ENCODE measurements at regions of chr1 and their contacts with region 1.

Region 1: GRCh38 chr1:242454262-242455045 is 70.0 kb downstream of the PLD5 start:
- DNase-seq: peak; percentile 28
- ATAC-seq: peak; percentile 91
- H3K4me3 ChIP-seq: no peak overlapping the region
- H3K27ac ChIP-seq: no peak overlapping the region; the same call in 1 of the 2 replicates
- H3K4me1 ChIP-seq: peaks cover under 1% of the 10 kb centered on the region; the same call in 1 of the 2 replicates
- H3K27me3 ChIP-seq: no peaks in the 10 kb centered on the region
- CTCF ChIP-seq: peak; percentile 85

Region 2: DNA sequence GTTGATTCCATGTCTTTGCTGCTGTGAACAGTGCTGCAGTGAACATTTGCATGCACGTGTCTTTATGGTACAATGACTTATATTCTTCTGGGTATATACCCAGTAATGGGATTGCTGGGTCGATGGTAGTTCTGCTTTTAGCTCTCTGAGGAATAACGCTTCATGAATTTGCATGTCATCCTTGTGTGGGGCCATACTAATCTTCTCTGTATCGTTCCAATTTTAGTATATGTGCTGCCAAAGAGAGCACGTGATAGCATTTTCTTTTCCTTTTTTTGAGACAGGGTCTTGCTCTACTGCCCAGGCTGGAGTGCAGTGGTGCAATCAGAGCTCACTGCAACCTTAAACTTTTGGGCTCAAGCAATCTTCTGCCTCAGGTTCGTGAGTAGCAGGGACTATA is 430.6 kb before region 1 on chr1:
- CTCF ChIA-PET with region 1: no interaction called
- POLR2A ChIA-PET with region 1: no interaction called
- in situ Hi-C with region 1: no loop called
- intact Hi-C with region 1: loop called (anchors 10 kb)
- DNase-seq: no peak
- ATAC-seq: no peak
- H3K4me3 ChIP-seq: no peak overlapping the region
- H3K27ac ChIP-seq: no peak overlapping the region
- H3K4me1 ChIP-seq: no peaks in the 10 kb centered on the region
- H3K27me3 ChIP-seq: no peaks in the 10 kb centered on the region
- CTCF ChIP-seq: no peak

Region 3: DNA sequence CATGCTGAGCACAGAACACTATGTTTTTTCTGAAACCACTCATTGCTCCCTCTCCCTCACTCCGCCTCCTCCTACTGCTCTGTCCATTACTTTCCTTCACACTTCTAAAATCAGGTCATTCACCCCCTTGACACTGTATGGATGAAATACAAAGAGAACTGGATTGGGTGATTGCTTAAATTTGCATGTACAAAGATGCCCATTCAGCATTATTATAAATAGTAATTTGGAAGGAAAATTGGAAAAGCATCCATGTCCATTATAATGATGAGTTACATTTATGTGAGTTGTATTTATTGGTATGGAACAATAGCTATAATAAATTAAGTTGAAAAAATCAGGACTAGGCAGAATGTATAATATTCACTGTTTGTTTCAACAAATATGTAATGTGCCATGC is 13.7 kb before region 1 on chr1:
- CTCF ChIA-PET with region 1: interaction called, 10 read pairs
- POLR2A ChIA-PET with region 1: no interaction called
- in situ Hi-C with region 1: no loop called
- intact Hi-C with region 1: no loop called
- DNase-seq: no peak
- ATAC-seq: no peak
- H3K4me3 ChIP-seq: no peak overlapping the region
- H3K27ac ChIP-seq: no peak overlapping the region
- H3K4me1 ChIP-seq: no peaks in the 10 kb centered on the region
- H3K27me3 ChIP-seq: no peaks in the 10 kb centered on the region
- CTCF ChIP-seq: no peak